ENCODE measurements at regions of chr19 and their contacts with region 1.

Region 1: DNA sequence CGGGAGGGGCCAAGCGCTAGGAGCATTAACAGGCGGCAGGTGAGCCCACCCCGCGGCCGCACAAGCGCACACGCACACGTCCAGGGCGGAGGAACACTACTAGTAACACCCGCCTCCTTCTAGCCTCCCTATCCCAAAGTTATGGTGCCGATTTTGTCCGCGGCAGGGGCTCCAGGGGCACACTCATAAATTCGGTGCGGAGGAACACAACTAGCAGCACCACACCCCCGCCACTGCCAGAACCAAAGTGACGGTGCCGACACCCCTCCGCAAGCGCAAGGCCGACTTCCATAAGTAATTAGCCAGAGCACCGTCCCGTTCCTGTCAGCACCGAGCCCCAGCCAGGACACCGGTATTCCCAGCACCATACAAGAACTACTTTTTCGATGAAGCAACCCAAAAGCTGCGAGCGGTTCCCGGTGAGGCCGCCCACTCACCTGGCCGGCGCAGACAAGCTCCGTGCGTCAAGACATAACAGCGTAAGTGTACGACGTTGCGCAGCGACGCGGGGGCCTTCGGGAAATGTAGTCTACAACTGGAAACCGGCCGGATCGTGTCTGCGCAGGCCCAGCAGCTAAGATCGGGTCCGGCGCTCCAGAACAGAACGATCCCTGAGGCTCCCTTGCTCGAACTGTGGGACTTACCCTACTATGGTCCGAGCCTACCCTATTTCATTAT is at the starts of genes ZNF540 and ZNF571:
- DNase-seq: peak; percentile 94 to 97
- H3K4me3 ChIP-seq: peak within 1 kb of the TSS; percentile 68 to 71
- H3K27ac ChIP-seq: peak within 1 kb of the TSS; percentile 78 to 86
- H3K4me1 ChIP-seq: peaks cover 0 to 23% (median 11%) of the 10 kb centered on the region in 4 donors
- H3K27me3 ChIP-seq: no peaks in the 10 kb centered on the region
- CTCF ChIP-seq: no peak

Region 2: DNA sequence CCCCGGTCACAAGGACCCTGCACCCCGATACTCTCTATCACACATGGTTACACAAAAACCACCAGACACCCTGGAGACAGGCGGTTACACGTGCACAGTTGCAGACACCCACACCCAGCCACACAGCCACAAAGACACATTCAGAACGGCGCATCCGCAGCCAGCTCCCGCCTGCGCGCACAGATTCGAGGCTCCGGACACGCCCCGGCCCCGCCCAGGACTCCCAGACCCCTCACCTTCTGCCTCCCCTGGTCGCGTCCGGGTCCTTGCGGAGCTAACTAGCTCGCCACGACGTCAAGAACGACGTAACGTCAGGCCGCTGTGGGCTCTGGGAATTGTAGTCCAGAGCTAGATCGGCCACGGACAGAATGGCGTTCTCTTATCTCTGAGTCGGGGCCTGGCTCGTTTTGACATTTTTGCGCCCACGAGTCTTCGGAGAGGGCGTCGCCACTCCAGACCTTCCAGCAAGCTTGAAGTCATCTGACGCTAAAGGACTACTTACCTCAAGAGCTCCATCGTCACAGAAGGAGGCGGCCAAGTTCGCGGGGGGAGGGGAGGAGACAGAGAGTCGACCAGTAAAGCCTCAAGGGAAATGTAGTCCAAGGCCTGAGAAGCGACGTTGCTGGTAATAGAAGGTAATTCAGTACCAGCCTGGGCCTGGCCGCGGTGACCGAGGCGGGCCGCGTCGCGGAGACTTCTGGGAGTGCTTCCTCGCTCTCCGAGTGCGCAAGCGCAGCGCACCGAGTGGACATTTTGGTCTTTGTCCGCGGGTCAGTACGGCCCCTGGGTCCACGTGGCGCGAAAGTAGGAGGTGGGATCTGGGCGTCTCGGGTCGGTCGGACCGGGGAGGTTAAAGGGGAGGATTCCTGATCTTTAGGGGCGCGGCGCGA is 1379.8 kb before region 1 on chr19 and contains the starts of genes ZNF146 and ZNF565:
- intact Hi-C with region 1: loop called (anchors 10 kb)
- DNase-seq: peak; percentile 98 to 99
- H3K4me3 ChIP-seq: peak within 1 kb of the TSS; percentile 58 to 86
- H3K27ac ChIP-seq: peak within 1 kb of the TSS; percentile 84
- H3K4me1 ChIP-seq: peaks cover 4 to 26% (median 18%) of the 10 kb centered on the region in 4 donors
- H3K27me3 ChIP-seq: no peaks in the 10 kb centered on the region
- CTCF ChIP-seq: peak; percentile 18 to 56

Region 3: GRCh38 chr19:37470216-37470615 is 124.2 kb before region 1 on chr19:
- intact Hi-C with region 1: loop called (anchors 10 kb)
- DNase-seq: no peak
- H3K4me3 ChIP-seq: peak overlapping the region; percentile 73 to 74
- H3K27ac ChIP-seq: peak overlapping the region in 1 of 2 donors; percentile 90
- H3K4me1 ChIP-seq: peaks cover 0 to 28% (median 16%) of the 10 kb centered on the region in 4 donors
- H3K27me3 ChIP-seq: no peaks in the 10 kb centered on the region
- CTCF ChIP-seq: no peak

Region 4: GRCh38 chr19:37492213-37492612 is 102.2 kb before region 1 on chr19:
- intact Hi-C with region 1: no loop called
- DNase-seq: no peak
- H3K4me3 ChIP-seq: no peak overlapping the region
- H3K27ac ChIP-seq: no peak overlapping the region
- H3K4me1 ChIP-seq: no peaks in the 10 kb centered on the region
- H3K27me3 ChIP-seq: no peaks in the 10 kb centered on the region
- CTCF ChIP-seq: no peak

Region 5: GRCh38 chr19:37519890-37520289 is 74.6 kb before region 1 on chr19:
- intact Hi-C with region 1: no loop called
- DNase-seq: no peak
- H3K4me3 ChIP-seq: no peak overlapping the region
- H3K27ac ChIP-seq: no peak overlapping the region
- H3K4me1 ChIP-seq: no peaks in the 10 kb centered on the region
- H3K27me3 ChIP-seq: no peaks in the 10 kb centered on the region
- CTCF ChIP-seq: no peak

Region 6: DNA sequence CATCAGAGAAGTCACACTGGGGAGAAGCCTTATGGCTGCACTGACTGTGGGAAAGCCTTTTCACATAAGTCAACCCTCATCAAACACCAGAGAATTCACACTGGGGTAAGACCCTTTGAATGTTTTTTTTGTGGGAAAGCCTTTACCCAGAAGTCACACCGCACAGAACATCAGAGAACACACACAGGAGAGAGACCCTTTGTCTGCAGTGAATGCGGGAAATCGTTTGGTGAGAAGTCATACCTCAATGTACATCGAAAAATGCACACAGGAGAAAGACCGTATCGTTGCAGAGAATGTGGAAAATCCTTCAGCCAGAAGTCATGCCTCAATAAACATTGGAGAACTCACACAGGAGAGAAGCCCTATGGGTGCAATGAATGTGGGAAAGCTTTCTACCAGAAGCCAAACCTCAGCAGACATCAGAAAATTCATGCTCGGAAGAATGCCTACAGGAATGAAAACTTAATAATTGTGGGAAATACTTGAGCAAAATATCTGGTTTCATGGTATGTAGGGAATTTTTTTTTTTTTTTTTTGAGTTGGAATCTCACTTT is 57.0 kb before region 1 on chr19:
- intact Hi-C with region 1: no loop called
- DNase-seq: no peak
- H3K4me3 ChIP-seq: no peak overlapping the region
- H3K27ac ChIP-seq: no peak overlapping the region
- H3K4me1 ChIP-seq: no peaks in the 10 kb centered on the region
- H3K27me3 ChIP-seq: no peaks in the 10 kb centered on the region
- CTCF ChIP-seq: no peak

Region 7: GRCh38 chr19:37655689-37656371 is 61.4 kb after region 1 on chr19:
- intact Hi-C with region 1: loop called (anchors 2 kb)
- DNase-seq: peak; percentile 74 to 91
- H3K4me3 ChIP-seq: peak overlapping the region; percentile 67 to 77
- H3K27ac ChIP-seq: peak overlapping the region; percentile 87 to 91
- H3K4me1 ChIP-seq: peaks cover 0 to 25% (median 16%) of the 10 kb centered on the region in 4 donors
- H3K27me3 ChIP-seq: no peaks in the 10 kb centered on the region
- CTCF ChIP-seq: no peak

Region 8: GRCh38 chr19:37914908-37915307 is 320.5 kb after region 1 on chr19:
- intact Hi-C with region 1: no loop called
- DNase-seq: no peak
- H3K4me3 ChIP-seq: no peak overlapping the region
- H3K27ac ChIP-seq: no peak overlapping the region
- H3K4me1 ChIP-seq: no peaks in the 10 kb centered on the region
- H3K27me3 ChIP-seq: no peaks in the 10 kb centered on the region
- CTCF ChIP-seq: no peak

Measured in tibial artery (tissue), 4 donors.